ENCODE measurements at regions of chr6 and their contacts with region 1.

Region 1: GRCh38 chr6:71349395-71349794 is 60.8 kb downstream of the OGFRL1 start:
- DNase-seq: no peak
- ATAC-seq: peak; percentile 34; the same call in 1 of the 3 replicates
- H3K4me3 ChIP-seq: no peak overlapping the region
- H3K27ac ChIP-seq: no peak overlapping the region
- H3K4me1 ChIP-seq: no peaks in the 10 kb centered on the region
- H3K27me3 ChIP-seq: no peaks in the 10 kb centered on the region
- CTCF ChIP-seq: peak; percentile 46 to 57 (median 50); a peak in 4 of 6 replicates
- EP300 ChIP-seq: no peak
- POLR2A ChIP-seq: no peak
- RAD21 ChIP-seq: peak; percentile 55

Region 2: GRCh38 chr6:71190809-71191208 is 158.6 kb before region 1 on chr6:
- CTCF ChIA-PET with region 1: interaction called, 25 read pairs
- POLR2A ChIA-PET with region 1: no interaction called
- RAD21 ChIA-PET with region 1: interaction called, 12 read pairs
- SMC1A ChIA-PET with region 1: interaction called, 15 read pairs
- in situ Hi-C with region 1: loop called (anchors 5 kb)
- intact Hi-C with region 1: loop called (anchors 1 kb)
- DNase-seq: no peak
- ATAC-seq: no peak
- H3K4me3 ChIP-seq: no peak overlapping the region
- H3K27ac ChIP-seq: no peak overlapping the region
- H3K4me1 ChIP-seq: no peaks in the 10 kb centered on the region
- H3K27me3 ChIP-seq: no peaks in the 10 kb centered on the region
- CTCF ChIP-seq: peak in 2 of 3 experiments; percentile 14 to 42; a peak in 2 of 6 replicates
- EP300 ChIP-seq: no peak
- POLR2A ChIP-seq: no peak
- RAD21 ChIP-seq: peak; percentile 52

Region 3: DNA sequence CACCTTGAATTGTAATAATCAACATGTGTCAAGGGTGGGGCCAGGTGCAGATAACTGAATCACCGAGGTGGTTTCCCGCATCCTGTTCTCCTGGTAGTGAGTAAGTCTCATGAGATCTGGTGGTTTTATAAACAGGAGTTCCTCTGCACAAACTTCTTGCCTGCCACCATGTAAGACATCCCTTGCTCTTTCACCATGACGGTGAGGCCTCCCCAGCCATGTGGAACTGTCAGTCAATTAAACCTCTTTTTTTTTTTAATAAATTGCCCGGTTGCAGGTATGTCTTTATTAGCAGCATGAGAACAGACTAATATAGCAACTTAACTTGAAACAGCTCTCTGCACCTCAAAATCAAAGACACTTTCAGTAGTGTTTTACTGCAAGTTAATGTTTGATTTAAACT is 60.8 kb after region 1 on chr6:
- CTCF ChIA-PET with region 1: no interaction called
- POLR2A ChIA-PET with region 1: no interaction called
- RAD21 ChIA-PET with region 1: no interaction called
- SMC1A ChIA-PET with region 1: no interaction called
- in situ Hi-C with region 1: no loop called
- intact Hi-C with region 1: no loop called
- DNase-seq: peak; percentile 5
- ATAC-seq: peak; percentile 62
- H3K4me3 ChIP-seq: no peak overlapping the region
- H3K27ac ChIP-seq: no peak overlapping the region
- H3K4me1 ChIP-seq: no peaks in the 10 kb centered on the region
- H3K27me3 ChIP-seq: no peaks in the 10 kb centered on the region
- CTCF ChIP-seq: no peak
- EP300 ChIP-seq: no peak
- POLR2A ChIP-seq: no peak
- RAD21 ChIP-seq: no peak

Measured in GM12878 (cell line).